ENCODE measurements at regions of chr5 and their contacts with region 1.

Region 1: DNA sequence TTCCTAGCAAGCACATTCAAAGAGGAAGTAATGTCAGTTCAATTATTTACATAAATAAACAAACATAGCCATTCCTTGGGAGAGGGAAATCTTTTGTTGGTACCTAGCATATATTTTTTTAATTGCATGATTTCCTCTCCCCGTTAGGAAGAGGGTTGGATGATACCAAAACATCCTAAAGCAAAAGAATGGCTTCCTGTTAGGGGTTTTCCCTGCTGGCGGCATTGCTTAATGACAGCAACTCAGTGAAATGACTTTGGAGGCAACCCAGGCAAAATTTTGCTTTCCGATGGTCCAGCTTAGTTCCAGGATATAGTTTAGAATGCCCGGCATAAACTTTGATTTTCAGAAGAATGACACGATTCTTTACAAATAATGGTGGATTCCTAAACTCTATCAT is 73.2 kb downstream of the MAT2B start:
- DNase-seq: no peak
- H3K4me3 ChIP-seq: no peak overlapping the region
- H3K27ac ChIP-seq: no peak overlapping the region
- H3K4me1 ChIP-seq: no peaks in the 10 kb centered on the region
- H3K27me3 ChIP-seq: no peaks in the 10 kb centered on the region
- CTCF ChIP-seq: no peak
- EP300 ChIP-seq: no peak
- POLR2A ChIP-seq: no peak
- RAD21 ChIP-seq: no peak

Region 2: DNA sequence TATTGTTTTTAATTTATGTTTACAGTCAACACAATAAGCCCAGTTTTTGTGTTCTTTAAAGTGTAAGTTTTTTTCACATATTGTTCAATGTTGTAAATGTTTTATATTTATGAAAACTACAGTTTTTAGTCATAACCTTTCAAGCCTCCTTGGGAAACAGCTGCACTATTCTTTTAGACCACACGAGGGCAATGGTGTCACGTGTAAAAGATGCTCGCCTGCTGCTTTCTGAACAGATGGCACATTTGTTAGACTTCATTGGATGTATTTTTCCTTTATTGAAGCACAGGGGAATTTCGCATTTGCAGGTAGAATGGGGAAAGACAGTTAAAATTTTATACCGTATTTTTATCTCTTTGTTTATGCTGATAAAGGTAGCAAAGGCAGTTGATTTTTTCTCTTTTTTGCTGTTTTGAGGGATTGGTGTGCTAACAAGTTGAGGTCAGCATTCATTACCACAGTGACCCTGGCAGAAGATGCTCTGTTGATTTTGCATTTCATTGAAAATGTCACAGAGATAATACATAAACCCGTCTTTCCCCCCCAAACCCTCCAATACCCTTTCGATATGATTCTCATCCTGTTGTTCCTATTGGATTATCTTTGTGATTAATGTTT is 14.2 kb before region 1 on chr5:
- CTCF ChIA-PET with region 1: interaction called, 27 read pairs
- POLR2A ChIA-PET with region 1: no interaction called
- DNase-seq: peak in 1 of 2 experiments; percentile 83
- H3K4me3 ChIP-seq: peak overlapping the region in 1 of 4 experiments; percentile 36; a peak in 1 of 8 replicates
- H3K27ac ChIP-seq: no peak overlapping the region
- H3K4me1 ChIP-seq: peaks cover 8 to 25% (median 18%) of the 10 kb centered on the region in 4 experiments; a peak in 6 of 7 replicates
- H3K27me3 ChIP-seq: peaks cover 0 to 20% (median 14%) of the 10 kb centered on the region in 4 experiments; a peak in 4 of 7 replicates
- CTCF ChIP-seq: peak; percentile 10 to 83 (median 62)
- EP300 ChIP-seq: no peak
- POLR2A ChIP-seq: no peak
- RAD21 ChIP-seq: peak; percentile 91

Region 3: GRCh38 chr5:163789870-163790269 is 211.2 kb after region 1 on chr5:
- CTCF ChIA-PET with region 1: no interaction called
- POLR2A ChIA-PET with region 1: no interaction called
- DNase-seq: no peak
- H3K4me3 ChIP-seq: no peak overlapping the region
- H3K27ac ChIP-seq: no peak overlapping the region
- H3K4me1 ChIP-seq: no peaks in the 10 kb centered on the region
- H3K27me3 ChIP-seq: no peaks in the 10 kb centered on the region
- CTCF ChIP-seq: no peak
- EP300 ChIP-seq: no peak
- POLR2A ChIP-seq: no peak
- RAD21 ChIP-seq: no peak

Measured in H1 (cell line).